GM13977 (cell line): ENCODE measurements at regions of chr6 and their contacts with region 1.

Region 1: DNA sequence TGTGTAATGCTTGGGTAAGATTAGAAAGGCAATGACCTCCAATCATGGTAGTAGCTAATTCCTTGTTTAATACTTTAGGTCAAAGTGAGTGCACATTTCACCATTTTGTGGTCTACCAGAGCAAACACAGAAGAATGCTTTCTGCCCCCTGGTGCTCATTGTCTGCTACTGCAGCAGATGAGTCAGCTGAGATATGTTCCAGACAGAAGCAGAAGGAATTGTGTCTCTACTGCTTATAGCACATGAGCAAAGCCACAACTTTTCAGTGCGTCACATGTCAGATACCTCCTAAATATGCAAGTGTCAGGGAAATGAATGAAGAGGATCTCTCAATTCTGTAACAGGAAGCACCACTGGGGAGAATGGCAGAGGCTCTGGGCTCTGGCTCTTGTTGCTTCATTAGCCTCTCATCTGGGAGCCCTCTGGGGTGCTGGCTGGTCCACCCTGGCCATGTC is 308.9 kb downstream of the ALDH8A1 start:
- DNase-seq: peak; percentile 66
- CTCF ChIP-seq: peak; percentile 88

Region 2: DNA sequence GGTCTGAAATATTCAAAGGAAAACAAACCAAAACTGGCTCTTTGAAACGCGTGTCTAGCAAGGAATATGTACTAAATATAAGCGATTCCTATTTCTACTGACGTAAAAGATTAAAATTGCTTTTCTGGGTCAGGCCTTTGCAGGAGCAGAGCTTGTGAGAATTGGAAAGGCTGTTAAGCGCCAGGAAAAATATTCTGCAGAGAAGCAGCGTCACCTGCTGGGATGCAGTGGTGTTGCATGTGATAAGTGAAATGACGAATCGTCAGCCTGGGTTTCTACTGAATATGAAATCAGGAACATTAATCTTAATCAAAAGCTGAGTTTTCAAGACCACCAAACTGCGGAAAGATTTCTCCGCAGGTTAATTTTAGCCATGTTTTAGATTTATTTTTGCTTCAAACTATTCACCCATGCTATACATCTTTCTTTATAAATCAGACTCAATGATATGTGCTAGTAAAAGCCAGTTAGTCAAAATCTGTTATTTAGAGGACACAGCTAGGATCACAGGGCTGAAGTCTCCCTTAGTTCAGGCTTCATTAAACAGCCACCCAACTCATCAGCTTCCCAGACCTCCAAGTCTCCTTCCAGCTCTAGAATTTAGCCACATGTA is 241.5 kb after region 1 on chr6:
- in situ Hi-C with region 1: loop called (anchors 10 kb)
- DNase-seq: peak; percentile 48
- CTCF ChIP-seq: peak; percentile 97

Region 3: DNA sequence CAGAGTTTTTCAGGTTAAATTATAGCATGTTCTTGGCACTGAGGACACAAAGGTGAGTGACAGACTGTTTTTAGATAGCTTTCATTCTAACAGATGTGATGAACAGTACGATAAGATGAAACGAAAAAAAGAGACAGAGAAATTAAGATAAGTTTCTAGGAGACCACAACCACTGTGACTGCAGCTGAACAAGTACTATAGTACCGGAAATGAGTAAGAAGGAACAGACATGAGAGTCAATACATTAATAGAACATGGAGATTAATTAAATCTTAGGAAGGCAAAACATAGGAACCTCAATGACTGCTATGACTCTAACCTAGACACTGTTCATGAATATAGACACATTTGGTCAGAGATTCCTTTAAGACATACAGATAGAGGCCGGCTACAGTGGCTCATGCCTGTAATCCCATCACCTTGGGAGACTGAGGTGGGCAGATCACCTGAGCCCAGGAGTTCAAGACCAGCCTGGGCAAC is 373.4 kb after region 1 on chr6:
- in situ Hi-C with region 1: no loop called
- DNase-seq: peak; percentile 50
- CTCF ChIP-seq: no peak